ENCODE measurements at regions of chr4 and their contacts with region 1.

Region 1: DNA sequence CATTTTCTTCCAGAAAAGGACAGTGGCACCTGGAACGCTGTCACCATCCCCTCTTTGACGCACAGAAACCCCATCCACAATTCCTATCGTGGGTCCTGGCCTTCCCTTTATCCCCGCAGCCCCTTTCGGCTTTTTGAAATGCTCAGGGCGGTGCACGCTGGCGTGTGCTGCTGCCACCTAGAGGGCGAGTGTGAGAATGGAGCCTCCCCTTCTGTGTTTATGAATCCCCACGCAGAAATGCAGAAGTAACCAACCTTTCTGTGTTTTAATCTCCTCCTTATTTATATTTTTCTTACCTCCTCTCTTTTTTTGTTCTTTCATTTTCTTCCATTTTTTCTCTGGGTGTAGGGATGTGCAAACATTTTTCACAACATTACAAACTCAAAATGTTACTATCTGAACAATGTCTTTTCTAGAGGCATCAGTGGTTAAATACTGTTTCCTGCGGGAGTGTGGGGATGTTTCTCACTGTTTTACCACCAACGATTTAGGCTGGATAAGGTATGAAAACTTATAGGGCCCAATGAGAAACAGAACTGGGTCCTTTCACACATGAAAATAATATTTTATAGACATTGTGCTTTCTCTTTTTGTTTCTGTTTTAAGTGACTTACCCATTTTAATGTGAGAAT is 50.0 kb downstream of the TMA16 start:
- DNase-seq: peak; percentile 72
- H3K4me3 Mint-ChIP-seq: no peak overlapping the region
- H3K27ac Mint-ChIP-seq: no peak overlapping the region
- H3K4me1 Mint-ChIP-seq: peaks cover 3% of the 10 kb centered on the region
- H3K27me3 Mint-ChIP-seq: no peaks in the 10 kb centered on the region

Region 2: GRCh38 chr4:162497564-162498167 is 1046.9 kb before region 1 on chr4:
- CTCF ChIA-PET with region 1: interaction called, 5 read pairs
- POLR2A ChIA-PET with region 1: no interaction called
- intact Hi-C with region 1: loop called (anchors 1 kb)
- DNase-seq: no peak
- H3K4me3 Mint-ChIP-seq: no peak overlapping the region
- H3K27ac Mint-ChIP-seq: no peak overlapping the region
- H3K4me1 Mint-ChIP-seq: no peaks in the 10 kb centered on the region
- H3K27me3 Mint-ChIP-seq: peaks cover 2% of the 10 kb centered on the region

Region 3: GRCh38 chr4:163107754-163108153 is 436.8 kb before region 1 on chr4:
- CTCF ChIA-PET with region 1: no interaction called
- POLR2A ChIA-PET with region 1: no interaction called
- intact Hi-C with region 1: loop called (anchors 5 kb)
- DNase-seq: no peak
- H3K4me3 Mint-ChIP-seq: no peak overlapping the region
- H3K27ac Mint-ChIP-seq: no peak overlapping the region
- H3K4me1 Mint-ChIP-seq: peaks cover 8% of the 10 kb centered on the region
- H3K27me3 Mint-ChIP-seq: no peaks in the 10 kb centered on the region

Region 4: GRCh38 chr4:163195247-163195765 is 349.2 kb before region 1 on chr4:
- CTCF ChIA-PET with region 1: no interaction called
- POLR2A ChIA-PET with region 1: no interaction called
- intact Hi-C with region 1: no loop called
- DNase-seq: no peak
- H3K4me3 Mint-ChIP-seq: no peak overlapping the region
- H3K27ac Mint-ChIP-seq: no peak overlapping the region
- H3K4me1 Mint-ChIP-seq: no peaks in the 10 kb centered on the region
- H3K27me3 Mint-ChIP-seq: peaks cover 14% of the 10 kb centered on the region

Region 5: DNA sequence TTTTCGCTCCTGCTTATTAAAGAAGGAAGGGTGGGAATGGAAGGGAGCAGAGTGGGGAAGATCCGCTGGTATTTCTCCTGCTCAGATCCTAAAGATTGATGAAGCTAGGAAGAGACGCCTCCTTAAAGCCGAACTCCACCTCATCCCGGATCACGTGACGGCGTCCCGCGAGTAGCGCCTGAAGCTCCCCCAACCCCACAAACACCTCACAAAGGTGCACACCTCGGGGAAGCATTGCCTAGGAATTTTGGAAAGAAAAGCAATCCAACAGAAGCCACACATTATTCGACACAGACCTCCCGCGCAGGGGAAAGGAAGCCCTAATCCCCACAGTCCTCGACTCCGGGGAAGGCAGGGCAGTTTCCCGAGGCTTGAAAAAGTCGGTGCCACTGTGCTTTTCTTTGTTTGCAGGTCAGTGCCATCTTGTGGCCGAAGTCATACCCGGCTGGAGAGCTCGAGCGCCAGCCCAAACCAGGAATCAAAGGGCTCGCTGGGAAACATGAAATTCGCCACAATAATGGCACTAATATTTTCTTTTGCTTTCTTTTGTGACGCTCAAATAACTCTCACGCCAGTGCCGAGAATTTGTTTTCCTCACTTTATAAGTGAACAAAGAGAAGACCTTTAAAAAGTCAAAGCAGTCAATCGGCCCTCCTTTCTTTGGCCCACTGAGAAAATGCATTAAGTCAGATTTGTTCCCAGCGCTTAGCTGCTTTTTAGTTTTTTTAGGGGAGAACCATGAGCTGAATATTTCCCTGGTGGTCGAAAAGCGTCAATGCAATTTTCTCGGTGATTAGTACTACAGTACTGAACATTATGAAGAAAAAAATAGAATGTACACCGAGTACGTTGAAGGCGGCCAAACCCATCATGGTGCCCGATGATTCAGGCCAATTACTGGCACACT is 211.8 kb before region 1 on chr4 and contains the start of gene NPY1R:
- CTCF ChIA-PET with region 1: no interaction called
- POLR2A ChIA-PET with region 1: no interaction called
- intact Hi-C with region 1: loop called (anchors 10 kb)
- DNase-seq: peak; percentile 60
- H3K4me3 Mint-ChIP-seq: peak within 1 kb of the TSS; percentile 46
- H3K27ac Mint-ChIP-seq: no peak within 1 kb of the TSS
- H3K4me1 Mint-ChIP-seq: peaks cover 14% of the 10 kb centered on the region
- H3K27me3 Mint-ChIP-seq: peaks cover 41% of the 10 kb centered on the region
- total RNA-seq, gene NPY1R: not detected

Region 6: GRCh38 chr4:163494360-163495162 is 50.0 kb before region 1 on chr4 and contains the start of gene TMA16:
- CTCF ChIA-PET with region 1: interaction called, 25 read pairs
- POLR2A ChIA-PET with region 1: interaction called, 3 read pairs
- intact Hi-C with region 1: loop called (anchors 2 kb)
- DNase-seq: peak; percentile 92
- H3K4me3 Mint-ChIP-seq: peak within 1 kb of the TSS; percentile 99
- H3K27ac Mint-ChIP-seq: peak within 1 kb of the TSS; percentile 100
- H3K4me1 Mint-ChIP-seq: peaks cover 27% of the 10 kb centered on the region
- H3K27me3 Mint-ChIP-seq: peaks cover 2% of the 10 kb centered on the region
- total RNA-seq, gene TMA16: 46.0 to 52.0 TPM

Region 7: DNA sequence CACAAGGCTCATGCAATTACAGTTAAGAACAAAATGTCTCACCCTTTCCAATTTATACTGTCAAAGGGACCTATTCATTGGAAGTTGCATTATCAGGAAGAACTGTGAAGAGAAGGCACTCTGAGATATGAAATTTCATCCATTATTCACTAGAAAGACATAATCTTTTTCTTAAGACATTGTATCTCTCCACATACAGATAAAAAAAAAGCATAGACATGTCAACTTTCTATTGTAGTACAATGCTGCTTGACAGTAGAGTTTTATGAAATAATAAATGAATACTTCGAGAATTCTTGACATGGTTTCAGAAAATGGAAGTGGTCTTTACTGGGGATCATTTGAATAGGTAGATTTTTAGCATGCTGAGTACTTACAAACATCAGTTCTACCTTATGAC is 495.0 kb after region 1 on chr4:
- CTCF ChIA-PET with region 1: no interaction called
- POLR2A ChIA-PET with region 1: no interaction called
- intact Hi-C with region 1: no loop called
- DNase-seq: no peak
- H3K4me3 Mint-ChIP-seq: no peak overlapping the region
- H3K27ac Mint-ChIP-seq: no peak overlapping the region
- H3K4me1 Mint-ChIP-seq: no peaks in the 10 kb centered on the region
- H3K27me3 Mint-ChIP-seq: no peaks in the 10 kb centered on the region

Region 8: GRCh38 chr4:164731827-164732474 is 1187.4 kb after region 1 on chr4:
- CTCF ChIA-PET with region 1: interaction called, 105 read pairs
- POLR2A ChIA-PET with region 1: no interaction called
- intact Hi-C with region 1: no loop called
- DNase-seq: peak; percentile 63
- H3K4me3 Mint-ChIP-seq: no peak overlapping the region
- H3K27ac Mint-ChIP-seq: no peak overlapping the region
- H3K4me1 Mint-ChIP-seq: no peaks in the 10 kb centered on the region
- H3K27me3 Mint-ChIP-seq: peaks cover 6% of the 10 kb centered on the region

Measured in activated CD4-positive, alpha-beta memory T cell treated with anti-CD3 and anti-CD28 coated beads for 36 hours (primary cell).